ENCODE measurements at regions of chr10 and their contacts with region 1.

Region 1: DNA sequence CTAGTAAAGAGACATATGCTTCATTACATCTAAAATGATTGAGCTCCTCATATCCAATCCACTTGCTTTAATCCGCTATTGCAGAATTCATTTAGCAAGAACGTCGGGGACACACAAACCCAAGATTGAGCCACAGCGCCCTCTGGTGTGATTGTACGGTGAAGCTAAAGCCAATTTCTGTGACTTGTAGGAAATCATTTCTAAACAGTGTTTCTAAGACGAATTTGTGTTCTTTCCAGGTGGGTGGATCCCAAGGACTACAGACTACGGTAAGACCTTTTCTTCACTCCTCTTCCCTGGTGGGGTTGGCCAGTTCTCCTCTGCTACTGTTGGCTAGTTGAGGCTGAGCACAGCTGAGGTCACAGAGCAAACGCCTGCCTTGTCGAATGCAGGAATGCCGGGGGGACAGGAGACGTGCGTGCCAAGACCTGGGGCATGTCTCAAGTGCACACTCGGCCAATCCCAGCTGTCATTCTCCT is 5.2 kb downstream of the DMBT1 start:
- DNase-seq: peak; percentile 81
- ATAC-seq: peak; percentile 67 to 76

Region 2: GRCh38 chr10:122342293-122343134 is 223.3 kb before region 1 on chr10:
- intact Hi-C with region 1: loop called (anchors 5 kb)
- DNase-seq: peak; percentile 39
- ATAC-seq: peak; percentile 42 to 58

Region 3: GRCh38 chr10:122446668-122447423 is 118.9 kb before region 1 on chr10:
- intact Hi-C with region 1: loop called in 1 of 2 experiments (anchors 10 kb)
- DNase-seq: no peak
- ATAC-seq: peak; percentile 78 to 91

Region 4: DNA sequence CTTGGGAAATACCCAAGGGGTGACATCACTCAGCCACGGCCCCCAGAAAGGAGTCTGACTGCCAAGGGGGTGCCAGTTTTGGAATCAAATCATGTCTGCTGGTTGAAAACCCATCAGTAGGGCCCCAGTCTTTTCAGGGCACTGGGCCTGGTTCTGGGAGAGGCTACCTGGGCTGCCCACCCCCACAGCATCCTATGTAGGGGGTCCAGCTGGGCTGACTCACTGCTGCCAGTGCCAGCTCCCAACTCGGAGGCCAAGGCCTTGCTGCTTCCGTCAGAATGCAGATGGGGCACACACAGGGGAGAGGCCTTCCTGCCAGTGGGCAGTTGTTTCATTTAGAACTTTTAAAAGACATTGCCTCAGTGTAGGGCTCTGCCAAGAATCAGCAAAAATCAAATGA is 44.8 kb before region 1 on chr10:
- intact Hi-C with region 1: loop called in 1 of 2 experiments (anchors 5 kb)
- DNase-seq: no peak
- ATAC-seq: no peak

Measured in left cardiac atrium (tissue), 4 donors.